ENCODE measurements at regions of chr15 and their contacts with region 1.

Region 1: GRCh38 chr15:40941528-40942336 is 11.5 kb upstream of the CHAC1 start:
- DNase-seq: peak; percentile 59 to 84 (median 70)
- ATAC-seq: peak; percentile 86
- H3K4me3 ChIP-seq: peak overlapping the region; percentile 82
- H3K4me3 Mint-ChIP-seq: peak overlapping the region; percentile 79 to 95 (median 88)
- H3K27ac ChIP-seq: peak overlapping the region; percentile 75
- H3K27ac Mint-ChIP-seq: peak overlapping the region; percentile 58 to 92 (median 89)
- H3K4me1 ChIP-seq: peaks cover 12 to 27% of the 10 kb centered on the region in 2 donors
- H3K4me1 Mint-ChIP-seq: peaks cover 17 to 47% (median 44%) of the 10 kb centered on the region in 7 donors
- H3K27me3 ChIP-seq: no peaks in the 10 kb centered on the region
- H3K27me3 Mint-ChIP-seq: no peaks in the 10 kb centered on the region

Region 2: GRCh38 chr15:40928821-40929659 is 12.7 kb before region 1 on chr15 and contains the start of gene DLL4:
- CTCF ChIA-PET with region 1: interaction called, 21 read pairs
- POLR2A ChIA-PET with region 1: interaction called, 23 read pairs
- intact Hi-C with region 1: loop called in 1 of 2 experiments (anchors 1 kb)
- DNase-seq: peak in 6 of 9 donors; percentile 36 to 54 (median 48)
- ATAC-seq: peak; percentile 56
- H3K4me3 ChIP-seq: peak within 1 kb of the TSS; percentile 68
- H3K4me3 Mint-ChIP-seq: peak within 1 kb of the TSS; percentile 80 to 96 (median 83)
- H3K27ac ChIP-seq: no peak within 1 kb of the TSS
- H3K27ac Mint-ChIP-seq: peak within 1 kb of the TSS in 2 of 9 donors; percentile 32 to 55
- H3K4me1 ChIP-seq: peaks cover 19 to 54% of the 10 kb centered on the region in 2 donors
- H3K4me1 Mint-ChIP-seq: peaks cover 27 to 53% (median 49%) of the 10 kb centered on the region in 7 donors
- H3K27me3 ChIP-seq: peaks cover 5 to 43% of the 10 kb centered on the region in 2 donors
- H3K27me3 Mint-ChIP-seq: peaks cover 53 to 80% (median 56%) of the 10 kb centered on the region in 5 donors
- total RNA-seq, gene DLL4: not detected

Region 3: GRCh38 chr15:40952901-40953712 is 11.4 kb after region 1 on chr15 and contains the start of gene CHAC1:
- CTCF ChIA-PET with region 1: interaction called, 10 read pairs
- POLR2A ChIA-PET with region 1: interaction called, 34 read pairs
- intact Hi-C with region 1: loop called (anchors 1 kb)
- DNase-seq: peak; percentile 79 to 97 (median 94)
- ATAC-seq: peak; percentile 98
- H3K4me3 ChIP-seq: peak within 1 kb of the TSS; percentile 68
- H3K4me3 Mint-ChIP-seq: peak within 1 kb of the TSS; percentile 87 to 96 (median 94)
- H3K27ac ChIP-seq: peak within 1 kb of the TSS; percentile 74
- H3K27ac Mint-ChIP-seq: peak within 1 kb of the TSS in 8 of 9 donors; percentile 76 to 95 (median 88)
- H3K4me1 ChIP-seq: peaks cover 10 to 14% of the 10 kb centered on the region in 2 donors
- H3K4me1 Mint-ChIP-seq: peaks cover 7 to 34% (median 19%) of the 10 kb centered on the region in 7 donors
- H3K27me3 ChIP-seq: no peaks in the 10 kb centered on the region
- H3K27me3 Mint-ChIP-seq: peaks cover 0 to 4% (median 0%) of the 10 kb centered on the region in 5 donors
- total RNA-seq, gene CHAC1: 0.24 to 5.7 (median 1.1) TPM

Region 4: DNA sequence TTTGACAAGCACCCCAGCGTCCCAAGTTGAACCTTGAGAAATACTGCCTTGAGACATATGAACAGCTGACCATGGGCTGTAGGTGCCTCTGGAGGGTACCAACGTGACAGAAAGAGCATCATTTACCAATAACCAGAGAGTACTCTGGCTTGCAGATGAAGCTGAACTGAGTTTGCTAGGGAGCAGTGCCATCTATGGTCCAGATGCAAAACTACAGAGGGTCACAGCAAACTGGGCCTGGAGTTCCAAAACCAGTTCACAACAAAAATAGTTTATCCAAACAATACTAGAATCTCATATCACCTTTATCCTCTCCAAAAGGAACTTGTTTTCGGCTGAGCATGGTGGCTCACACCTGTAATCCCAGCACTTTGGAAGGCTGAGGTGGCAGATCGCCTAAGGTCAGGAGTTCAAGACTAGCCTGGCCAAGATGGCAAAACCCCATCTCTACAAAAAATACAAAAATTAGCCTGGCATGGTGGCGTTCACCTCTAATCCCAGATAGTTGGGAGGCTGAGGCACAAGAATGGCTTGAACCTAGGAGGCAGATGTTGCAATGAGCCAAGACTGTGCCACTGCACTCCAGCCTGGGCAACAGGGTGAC is 80.9 kb after region 1 on chr15:
- CTCF ChIA-PET with region 1: interaction called, 4 read pairs
- POLR2A ChIA-PET with region 1: no interaction called
- intact Hi-C with region 1: loop called in 1 of 2 experiments (anchors 2 kb)
- DNase-seq: peak; percentile 9 to 50 (median 34)
- ATAC-seq: peak; percentile 68
- H3K4me3 ChIP-seq: no peak overlapping the region
- H3K4me3 Mint-ChIP-seq: no peak overlapping the region
- H3K27ac ChIP-seq: no peak overlapping the region
- H3K27ac Mint-ChIP-seq: peak overlapping the region in 1 of 9 donors; percentile 41
- H3K4me1 ChIP-seq: no peaks in the 10 kb centered on the region
- H3K4me1 Mint-ChIP-seq: peaks cover 3 to 14% (median 7%) of the 10 kb centered on the region in 7 donors
- H3K27me3 ChIP-seq: no peaks in the 10 kb centered on the region
- H3K27me3 Mint-ChIP-seq: no peaks in the 10 kb centered on the region

Region 5: GRCh38 chr15:41180206-41180789 is 238.6 kb after region 1 on chr15:
- CTCF ChIA-PET with region 1: no interaction called
- POLR2A ChIA-PET with region 1: no interaction called
- intact Hi-C with region 1: loop called in 1 of 2 experiments (anchors 1 kb)
- DNase-seq: no peak
- ATAC-seq: no peak
- H3K4me3 ChIP-seq: no peak overlapping the region
- H3K4me3 Mint-ChIP-seq: no peak overlapping the region
- H3K27ac ChIP-seq: no peak overlapping the region
- H3K27ac Mint-ChIP-seq: no peak overlapping the region
- H3K4me1 ChIP-seq: no peaks in the 10 kb centered on the region
- H3K4me1 Mint-ChIP-seq: peaks cover 0 to 2% (median 0%) of the 10 kb centered on the region in 7 donors
- H3K27me3 ChIP-seq: no peaks in the 10 kb centered on the region
- H3K27me3 Mint-ChIP-seq: peaks cover 0 to 17% (median 0%) of the 10 kb centered on the region in 5 donors

Measured in naive thymus-derived CD4-positive, alpha-beta T cell (primary cell).